Posterior vena cava (tissue), 2 donors: ENCODE measurements at regions of chr7 and their contacts with region 1.

Region 1: DNA sequence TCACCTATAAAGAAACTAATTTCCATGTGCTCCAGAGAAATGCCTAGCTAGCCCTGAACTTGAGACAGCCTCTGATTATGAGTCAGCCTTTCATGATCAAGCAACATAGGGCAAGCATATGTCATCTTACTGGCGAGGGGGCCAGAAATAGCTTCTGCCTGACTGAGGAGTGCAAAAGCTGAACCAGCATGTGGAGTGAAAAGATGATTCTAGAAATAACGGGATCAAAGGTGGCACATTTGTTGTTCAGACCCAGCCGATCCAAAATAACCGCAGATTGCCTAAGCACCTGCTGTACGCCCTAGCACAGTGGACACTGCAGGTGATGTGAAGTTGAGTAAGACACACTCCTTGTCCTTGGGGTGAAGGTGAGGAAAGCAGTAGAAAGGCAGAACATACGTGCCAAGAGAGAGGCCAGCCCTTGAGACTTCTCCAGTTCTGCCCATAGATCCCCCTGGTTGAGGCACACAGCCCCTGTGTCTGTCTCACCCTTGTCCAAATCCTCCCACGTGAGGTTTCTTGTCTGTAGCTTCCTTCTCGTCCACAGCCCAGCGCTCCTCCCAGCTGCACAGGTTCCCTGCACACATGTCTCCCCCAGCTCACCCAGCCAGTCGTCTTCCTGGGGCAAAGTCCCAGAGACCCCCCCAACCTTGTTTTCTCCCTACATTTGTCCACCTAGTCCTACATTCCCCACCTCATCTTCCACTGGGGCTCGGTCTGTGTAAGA is 2.8 kb upstream of the BCL7B start:
- DNase-seq: no peak

Region 2: DNA sequence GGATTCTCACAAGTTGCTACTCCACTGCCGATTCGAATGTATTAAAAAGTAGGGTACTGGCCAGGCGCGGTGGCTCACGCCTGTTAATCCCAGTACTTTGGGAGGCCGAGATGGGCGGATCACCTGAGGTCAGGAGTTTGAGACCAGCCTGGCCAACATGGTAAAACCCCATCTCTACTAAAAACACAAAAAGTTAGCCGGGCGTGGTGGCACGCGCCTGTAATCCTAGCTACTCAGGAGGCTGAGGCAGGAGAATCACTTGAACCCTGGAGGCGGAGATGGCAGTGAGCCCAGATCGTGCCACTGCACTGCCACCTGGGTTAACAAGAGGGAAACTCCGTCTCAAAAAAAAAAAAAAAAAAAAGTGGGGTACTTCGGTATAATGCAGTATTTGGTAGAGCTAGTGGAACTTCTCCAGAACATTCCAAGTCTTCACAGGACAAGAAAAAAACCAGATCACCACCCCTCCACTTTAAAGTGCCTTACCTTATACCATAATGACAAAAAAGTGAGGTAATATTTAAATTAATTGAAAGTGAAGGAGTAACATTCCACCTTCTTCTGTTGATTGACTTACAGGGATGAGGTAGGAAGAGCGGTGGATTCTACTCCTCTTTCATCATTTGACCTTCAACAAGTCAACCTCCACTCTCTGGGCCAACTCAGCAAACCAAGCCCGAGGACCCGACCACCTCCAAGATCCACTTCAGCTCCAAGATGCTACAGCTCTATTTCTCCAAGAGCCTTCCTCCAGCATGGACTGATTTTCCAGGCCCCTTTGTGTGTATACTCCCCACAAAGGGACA is 40.2 kb before region 1 on chr7:
- intact Hi-C with region 1: loop called in 1 of 2 experiments (anchors 10 kb)
- DNase-seq: peak; percentile 72

Region 3: DNA sequence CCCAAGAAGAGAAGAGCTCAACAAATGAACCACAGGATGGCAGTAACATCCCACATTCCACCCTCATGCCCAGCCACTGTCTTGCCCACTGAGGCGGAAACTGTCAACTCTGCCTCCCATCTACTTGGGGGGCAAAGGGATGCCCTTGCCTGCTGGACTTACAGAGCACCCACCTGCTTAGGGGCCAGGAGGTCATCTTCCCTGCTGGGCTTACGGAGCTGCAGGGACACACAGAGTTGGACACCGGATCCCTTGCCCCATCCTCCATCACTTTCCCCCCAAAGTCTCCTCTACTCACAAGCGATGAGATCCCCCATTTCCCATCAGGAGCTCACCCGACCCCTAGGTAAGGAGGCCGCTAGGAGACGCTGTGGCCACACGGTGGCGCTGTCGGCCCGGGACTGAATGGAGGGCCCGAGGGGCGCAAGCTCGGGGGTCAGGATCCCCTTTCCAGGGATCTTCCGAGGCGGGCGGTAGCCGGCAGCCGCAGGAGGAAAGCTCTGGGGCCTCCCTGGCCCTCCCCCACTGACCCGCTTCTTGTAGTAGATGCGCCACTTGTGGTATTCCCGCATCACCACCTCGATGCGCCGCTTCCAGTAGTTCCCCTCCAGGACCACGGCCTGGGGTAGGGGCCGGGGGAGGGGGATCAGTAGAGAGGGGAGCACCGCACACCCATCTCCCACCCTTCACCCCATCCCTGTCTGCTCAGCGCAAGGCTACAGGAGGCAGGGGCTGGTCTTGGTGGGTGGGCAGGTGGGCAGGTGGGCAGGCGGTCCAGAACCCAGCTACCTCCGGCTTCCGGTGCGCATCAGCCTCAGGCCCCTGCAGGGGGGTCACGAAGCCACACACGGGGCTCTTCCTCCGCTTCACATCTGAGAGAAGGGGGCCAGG is 46.8 kb after region 1 on chr7:
- intact Hi-C with region 1: no loop called
- DNase-seq: no peak

Region 4: DNA sequence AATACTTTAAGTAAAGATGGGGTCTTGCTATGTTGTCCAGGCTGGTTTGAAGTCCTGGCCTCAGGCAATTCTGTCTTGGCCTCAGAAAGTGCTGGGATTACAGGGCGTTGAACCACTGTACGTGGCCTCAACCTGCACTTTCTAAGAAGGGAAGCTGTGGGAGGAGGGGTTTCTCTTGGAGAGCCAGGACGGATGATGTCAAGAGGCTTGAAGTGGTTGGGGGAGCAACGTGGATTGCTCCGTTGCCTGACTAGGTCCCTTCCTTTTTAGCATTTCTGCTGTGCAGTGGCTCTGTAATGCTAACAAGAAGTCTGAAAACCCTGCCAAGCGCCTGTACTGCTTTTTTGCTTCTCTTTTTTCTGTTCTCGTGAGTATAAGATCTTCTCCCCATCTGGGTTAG is 130.4 kb after region 1 on chr7:
- intact Hi-C with region 1: no loop called
- DNase-seq: no peak

Region 5: DNA sequence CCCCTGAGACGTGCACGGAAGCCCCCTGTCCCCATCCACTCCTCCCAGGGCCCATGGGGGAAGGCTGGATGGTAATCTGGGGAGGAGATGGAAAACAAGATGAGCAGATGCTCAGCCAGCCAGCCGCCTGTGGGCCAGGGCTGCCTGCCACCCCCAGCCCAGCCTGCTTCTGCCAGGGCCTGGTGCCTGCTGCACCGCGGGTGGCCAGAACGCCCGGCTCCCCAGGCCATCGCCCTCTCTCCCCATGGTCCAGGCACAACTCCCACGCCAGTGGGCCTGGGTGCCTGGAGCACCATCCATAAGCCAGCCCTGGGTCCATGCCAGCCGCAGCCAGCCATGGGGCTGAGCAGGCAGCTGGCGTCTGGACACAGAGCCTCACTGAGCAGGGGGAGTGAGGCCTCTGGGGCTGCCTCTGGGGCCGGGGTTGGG is 410.5 kb after region 1 on chr7:
- intact Hi-C with region 1: no loop called
- DNase-seq: peak; percentile 78